ENCODE measurements at regions of chr12 and their contacts with region 1.

Region 1: GRCh38 chr12:27305673-27306456 is 26.8 kb upstream of the BMAL2 start:
- DNase-seq: peak; percentile 48
- H3K4me3 ChIP-seq: no peak overlapping the region
- H3K27ac ChIP-seq: no peak overlapping the region
- H3K4me1 ChIP-seq: no peaks in the 10 kb centered on the region
- H3K27me3 ChIP-seq: no peaks in the 10 kb centered on the region
- CTCF ChIP-seq: peak; percentile 66; the same call in 1 of the 2 replicates

Region 2: GRCh38 chr12:26853303-26854030 is 452.4 kb before region 1 on chr12:
- CTCF ChIA-PET with region 1: interaction called, 9 read pairs
- POLR2A ChIA-PET with region 1: no interaction called
- intact Hi-C with region 1: loop called (anchors 5 kb)
- DNase-seq: peak; percentile 66
- H3K4me3 ChIP-seq: no peak overlapping the region
- H3K27ac ChIP-seq: no peak overlapping the region
- H3K4me1 ChIP-seq: peaks cover 6% of the 10 kb centered on the region
- H3K27me3 ChIP-seq: no peaks in the 10 kb centered on the region
- CTCF ChIP-seq: peak; percentile 95

Region 3: DNA sequence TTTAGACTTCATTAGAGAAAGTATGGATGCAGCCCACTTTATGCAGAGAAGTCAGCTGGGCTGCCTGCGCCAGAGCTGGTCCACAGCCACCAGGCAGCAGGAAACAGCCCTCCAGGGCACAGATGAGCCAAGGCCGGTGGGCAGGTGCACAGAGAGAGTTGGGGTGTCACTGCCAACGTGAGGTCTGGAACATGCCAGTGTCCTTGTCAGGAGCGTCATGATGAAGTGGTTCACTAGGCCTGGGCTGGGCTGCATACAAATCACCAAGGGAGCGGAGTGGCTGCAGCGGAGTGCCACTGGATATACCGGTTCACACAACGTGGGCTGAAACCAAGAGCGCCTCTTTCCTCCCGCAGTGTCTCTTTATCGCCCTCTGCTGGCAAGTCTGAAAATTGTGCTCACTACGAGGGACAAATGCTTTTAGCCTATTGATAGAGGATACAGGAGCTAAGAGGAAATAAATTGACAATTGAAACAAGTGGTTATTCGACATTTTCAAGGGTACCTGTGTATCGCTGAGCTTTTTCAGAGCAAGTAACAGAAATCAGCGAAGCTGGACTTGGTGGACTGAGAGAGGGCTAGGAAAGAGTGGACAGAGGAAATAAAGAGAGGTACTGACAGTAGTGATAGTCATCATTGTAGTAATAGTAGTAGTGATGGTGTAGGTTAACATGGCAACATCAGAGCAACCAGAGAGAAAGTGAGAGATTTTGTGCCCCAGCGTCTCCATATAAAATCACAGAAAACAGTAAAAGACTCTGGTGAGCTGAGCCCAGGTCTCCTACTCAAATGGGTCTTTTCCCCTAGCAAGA is 420.9 kb before region 1 on chr12:
- CTCF ChIA-PET with region 1: no interaction called
- POLR2A ChIA-PET with region 1: no interaction called
- intact Hi-C with region 1: no loop called
- DNase-seq: peak; percentile 89
- H3K4me3 ChIP-seq: no peak overlapping the region
- H3K27ac ChIP-seq: no peak overlapping the region
- H3K4me1 ChIP-seq: no peaks in the 10 kb centered on the region
- H3K27me3 ChIP-seq: no peaks in the 10 kb centered on the region
- CTCF ChIP-seq: peak; percentile 97

Region 4: GRCh38 chr12:27034607-27035293 is 271.1 kb before region 1 on chr12:
- CTCF ChIA-PET with region 1: interaction called, 3 read pairs
- POLR2A ChIA-PET with region 1: no interaction called
- intact Hi-C with region 1: loop called (anchors 1 kb)
- DNase-seq: no peak
- H3K4me3 ChIP-seq: no peak overlapping the region
- H3K27ac ChIP-seq: no peak overlapping the region
- H3K4me1 ChIP-seq: no peaks in the 10 kb centered on the region
- H3K27me3 ChIP-seq: no peaks in the 10 kb centered on the region
- CTCF ChIP-seq: no peak

Region 5: DNA sequence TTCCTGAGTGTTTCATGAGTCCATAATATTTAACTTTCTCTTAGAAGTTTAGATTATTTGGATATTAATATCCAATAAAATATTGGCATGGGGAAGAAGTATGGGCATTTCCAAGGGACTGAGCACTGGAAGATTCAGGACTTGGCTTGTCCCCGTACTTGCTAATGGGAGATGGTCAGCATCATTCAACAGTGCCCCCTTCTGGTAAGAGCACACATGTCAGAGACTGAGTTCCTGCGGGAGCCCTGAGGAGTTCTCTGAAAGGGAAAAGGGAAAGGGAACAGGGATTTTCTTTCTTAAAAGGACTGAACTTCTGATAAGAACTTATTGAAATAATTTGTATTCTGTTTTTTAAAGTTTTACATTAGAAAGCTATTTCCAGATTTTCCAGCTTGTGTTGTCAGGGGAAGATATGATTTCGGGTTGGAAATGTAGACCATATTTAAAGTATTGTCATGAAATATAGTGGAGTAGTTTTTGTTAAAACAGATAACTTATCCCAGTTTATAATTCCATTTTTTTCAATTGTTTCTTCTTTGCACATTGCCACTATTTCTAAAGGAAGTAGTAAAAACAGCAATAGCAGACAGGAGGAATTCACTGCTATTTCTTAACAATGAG is 163.7 kb before region 1 on chr12:
- CTCF ChIA-PET with region 1: no interaction called
- POLR2A ChIA-PET with region 1: no interaction called
- intact Hi-C with region 1: loop called (anchors 5 kb)
- DNase-seq: peak; percentile 80
- H3K4me3 ChIP-seq: no peak overlapping the region
- H3K27ac ChIP-seq: no peak overlapping the region
- H3K4me1 ChIP-seq: no peaks in the 10 kb centered on the region
- H3K27me3 ChIP-seq: no peaks in the 10 kb centered on the region
- CTCF ChIP-seq: peak; percentile 94

Region 6: GRCh38 chr12:27220057-27220987 is 85.5 kb before region 1 on chr12:
- CTCF ChIA-PET with region 1: no interaction called
- POLR2A ChIA-PET with region 1: no interaction called
- intact Hi-C with region 1: no loop called
- DNase-seq: no peak
- H3K4me3 ChIP-seq: no peak overlapping the region
- H3K27ac ChIP-seq: no peak overlapping the region
- H3K4me1 ChIP-seq: no peaks in the 10 kb centered on the region
- H3K27me3 ChIP-seq: no peaks in the 10 kb centered on the region
- CTCF ChIP-seq: no peak

Region 7: DNA sequence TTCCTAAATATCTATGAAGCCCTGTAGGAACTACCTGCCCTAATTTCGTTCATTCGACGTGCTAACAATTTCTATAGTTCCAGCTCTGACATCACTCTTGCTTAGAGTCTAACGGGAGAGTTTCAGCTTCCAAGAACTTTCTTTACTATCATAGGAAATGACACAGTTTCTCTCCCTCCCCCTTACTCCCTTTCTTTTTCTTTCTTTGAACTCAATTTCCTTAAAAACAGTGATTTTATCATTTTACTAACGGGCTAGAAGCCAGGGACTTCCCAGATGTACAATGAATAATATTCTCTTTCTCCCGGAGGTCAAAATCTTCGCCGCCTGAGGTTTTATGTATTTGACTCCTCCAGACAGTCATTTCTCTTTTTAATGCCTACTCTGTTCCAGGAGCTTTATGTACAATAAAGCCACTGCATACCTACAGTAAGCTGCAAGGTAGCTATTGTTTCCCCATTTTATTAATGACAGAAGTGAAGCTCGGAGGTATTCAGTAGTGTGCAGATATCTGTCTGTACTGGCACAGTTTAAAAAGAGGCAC is 156.4 kb after region 1 on chr12:
- CTCF ChIA-PET with region 1: interaction called, 17 read pairs
- POLR2A ChIA-PET with region 1: no interaction called
- intact Hi-C with region 1: no loop called
- DNase-seq: peak; percentile 7
- H3K4me3 ChIP-seq: no peak overlapping the region
- H3K27ac ChIP-seq: no peak overlapping the region
- H3K4me1 ChIP-seq: peaks cover 7% of the 10 kb centered on the region
- H3K27me3 ChIP-seq: no peaks in the 10 kb centered on the region
- CTCF ChIP-seq: no peak